Caco-2 (cell line): ENCODE measurements at regions of chr10 and their contacts with region 1.

Region 1: GRCh38 chr10:49471532-49471931 is 67.4 kb downstream of the ERCC6 start:
- DNase-seq: no peak
- H3K4me3 ChIP-seq: no peak overlapping the region
- H3K4me3 Mint-ChIP-seq: no peak overlapping the region
- H3K27ac Mint-ChIP-seq: no peak overlapping the region
- H3K4me1 ChIP-seq: 0 out of 2 replicates have a peak, but pooled peaks cover 8% of the 10 kb centered on the region
- H3K4me1 Mint-ChIP-seq: peaks cover 10% of the 10 kb centered on the region
- H3K27me3 ChIP-seq: no peaks in the 10 kb centered on the region
- H3K27me3 Mint-ChIP-seq: no peaks in the 10 kb centered on the region
- CTCF ChIP-seq: no peak

Region 2: DNA sequence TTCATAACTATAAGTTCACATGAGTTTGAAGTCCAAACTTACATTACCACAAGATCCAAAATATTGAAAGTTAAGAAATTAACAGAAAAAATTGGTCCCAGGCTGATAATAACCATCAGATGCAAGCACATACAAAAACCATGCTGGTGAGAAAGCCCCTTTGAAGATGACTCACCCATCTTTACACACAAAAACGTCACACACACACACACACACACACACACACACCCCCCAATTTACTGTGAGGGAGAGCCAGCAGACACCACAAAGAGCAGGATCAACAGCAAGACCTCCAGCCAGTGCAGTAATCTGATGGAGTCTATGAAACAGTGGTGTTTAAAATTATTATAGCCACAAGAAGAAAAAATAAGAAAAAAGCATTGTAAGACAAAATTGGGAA is 25.5 kb before region 1 on chr10:
- CTCF ChIA-PET with region 1: interaction called, 10 read pairs
- POLR2A ChIA-PET with region 1: no interaction called
- intact Hi-C with region 1: no loop called
- DNase-seq: no peak
- H3K4me3 ChIP-seq: no peak overlapping the region
- H3K4me3 Mint-ChIP-seq: no peak overlapping the region
- H3K27ac Mint-ChIP-seq: no peak overlapping the region
- H3K4me1 ChIP-seq: no peaks in the 10 kb centered on the region
- H3K4me1 Mint-ChIP-seq: no peaks in the 10 kb centered on the region
- H3K27me3 ChIP-seq: no peaks in the 10 kb centered on the region
- H3K27me3 Mint-ChIP-seq: no peaks in the 10 kb centered on the region
- CTCF ChIP-seq: no peak